ENCODE measurements at regions of chr4 and their contacts with region 1.

Region 1: DNA sequence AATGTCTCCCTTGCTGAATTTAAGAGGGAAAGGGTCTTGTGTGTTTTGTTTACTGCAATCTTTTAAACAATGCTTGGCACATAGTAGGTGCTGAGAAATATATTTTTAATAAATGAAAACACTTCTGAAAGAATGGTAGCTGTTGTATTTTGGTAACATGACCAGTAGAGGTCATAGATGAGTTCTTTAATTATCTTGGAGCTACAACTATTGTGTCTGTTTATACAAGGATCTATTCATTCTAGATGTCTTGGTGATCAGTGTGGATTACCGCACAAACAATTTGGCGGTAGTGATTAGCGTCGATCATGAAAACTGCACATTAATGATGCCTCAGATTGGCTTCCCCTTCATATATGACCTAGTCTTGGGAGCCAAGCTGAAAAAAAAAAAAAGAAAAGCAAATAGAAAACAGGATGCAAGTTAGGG is 21.4 kb upstream of the SCRG1 start:
- DNase-seq: no peak
- ATAC-seq: peak; percentile 37

Region 2: DNA sequence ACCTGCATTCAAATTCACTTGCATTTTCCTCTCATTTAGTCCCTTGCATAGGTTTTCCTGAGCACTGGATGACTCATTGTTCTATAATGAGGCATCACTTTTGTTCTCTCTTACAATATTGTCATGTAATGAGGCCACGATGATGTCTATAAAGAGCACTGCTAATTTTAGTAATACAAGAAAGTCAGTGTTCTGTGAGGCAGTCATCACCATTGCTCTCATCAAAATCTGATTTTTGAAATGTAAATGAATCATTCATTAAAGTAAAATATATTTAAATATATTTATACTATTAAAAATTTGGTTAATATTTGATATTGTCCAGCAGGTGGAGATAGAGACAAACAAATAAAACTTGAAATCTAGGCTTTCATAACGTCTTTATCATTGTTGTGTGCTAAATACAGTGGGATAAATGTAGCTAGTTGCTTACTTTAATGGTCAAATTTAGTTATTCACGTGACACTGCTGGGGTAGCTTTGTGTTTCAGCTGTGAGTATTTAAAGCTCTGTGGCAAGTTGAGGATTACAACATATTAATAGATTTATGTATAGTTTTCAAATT is 101.6 kb before region 1 on chr4:
- intact Hi-C with region 1: loop called (anchors 2 kb)
- DNase-seq: no peak
- ATAC-seq: peak; percentile 74

Region 3: GRCh38 chr4:173494013-173494970 is 74.0 kb after region 1 on chr4:
- intact Hi-C with region 1: loop called (anchors 2 kb)
- DNase-seq: peak; percentile 64
- ATAC-seq: peak; percentile 93

Measured in left ventricle myocardium superior (tissue), 1 donor.